A549 (cell line): ENCODE measurements at regions of chr1 and their contacts with region 1.

Region 1: GRCh38 chr1:165367375-165367993 is 11.0 kb upstream of the LMX1A start:
- DNase-seq: peak; percentile 71 to 74
- ATAC-seq: peak; percentile 65 to 89; a peak in 5 of 6 replicates
- H3K4me3 ChIP-seq: no peak overlapping the region
- H3K27ac ChIP-seq: no peak overlapping the region
- H3K4me1 ChIP-seq: no peaks in the 10 kb centered on the region
- CTCF ChIP-seq: peak; percentile 75
- EP300 ChIP-seq: no peak
- POLR2A ChIP-seq: no peak
- RAD21 ChIP-seq: peak; percentile 46 to 48; a peak in 4 of 5 replicates

Region 2: GRCh38 chr1:165073185-165074007 is 294.1 kb before region 1 on chr1:
- CTCF ChIA-PET with region 1: no interaction called
- POLR2A ChIA-PET with region 1: no interaction called
- DNase-seq: peak; percentile 37 to 59
- ATAC-seq: peak in 1 of 2 experiments; percentile 87; a peak in 4 of 6 replicates
- H3K4me3 ChIP-seq: no peak overlapping the region
- H3K27ac ChIP-seq: peak overlapping the region in 1 of 2 experiments; percentile 57; a peak in 3 of 6 replicates
- H3K4me1 ChIP-seq: peaks cover 5% of the 10 kb centered on the region; the same call in 1 of the 3 replicates
- CTCF ChIP-seq: peak; percentile 89
- EP300 ChIP-seq: no peak
- POLR2A ChIP-seq: no peak
- RAD21 ChIP-seq: peak; percentile 87 to 92

Region 3: DNA sequence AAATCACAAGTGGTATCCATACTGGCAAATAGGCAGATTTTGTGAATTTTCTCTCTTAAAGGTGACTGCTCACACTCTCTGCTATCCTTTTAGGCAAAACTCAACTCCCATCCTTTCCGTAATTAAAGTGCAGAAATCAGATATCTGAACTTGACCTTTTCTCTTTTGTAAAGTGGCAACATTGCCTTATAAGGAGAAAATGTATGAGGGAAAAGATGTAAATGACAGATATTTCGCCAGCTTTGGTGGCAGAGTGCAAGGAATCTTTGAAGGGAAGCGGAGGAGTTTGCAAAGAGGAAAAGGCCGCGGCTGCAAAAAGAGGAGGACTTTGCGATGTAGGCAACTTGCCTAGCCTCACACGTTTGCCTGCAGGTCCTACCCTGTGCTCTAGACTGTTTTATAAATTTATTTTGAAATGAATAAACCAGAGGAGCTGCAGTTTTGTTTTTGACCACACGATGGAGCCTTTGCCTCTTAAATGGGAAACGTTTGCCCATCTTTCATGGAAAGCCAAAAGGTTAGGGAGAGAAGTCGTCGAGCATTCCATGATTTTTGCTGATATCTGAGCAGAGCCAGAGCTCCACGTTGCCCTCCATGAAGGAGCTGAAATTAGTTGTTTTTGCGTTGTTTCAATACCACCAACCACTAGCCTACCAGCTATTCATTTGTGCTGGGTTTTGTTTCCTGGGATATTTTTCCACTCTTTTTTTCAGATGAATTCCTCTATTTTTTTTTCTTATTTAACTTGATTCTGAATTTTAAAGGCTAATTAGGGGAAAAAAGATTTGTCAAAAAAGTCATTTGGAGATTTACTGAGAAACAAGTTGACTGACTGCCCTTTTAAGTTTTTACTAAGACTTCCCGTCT is 253.2 kb before region 1 on chr1:
- CTCF ChIA-PET with region 1: interaction called, 72 read pairs
- POLR2A ChIA-PET with region 1: no interaction called
- DNase-seq: peak; percentile 17 to 59
- ATAC-seq: peak in 1 of 2 experiments; percentile 40; a peak in 3 of 6 replicates
- H3K4me3 ChIP-seq: no peak overlapping the region
- H3K27ac ChIP-seq: no peak overlapping the region
- H3K4me1 ChIP-seq: peaks cover 16% of the 10 kb centered on the region
- CTCF ChIP-seq: peak; percentile 79
- EP300 ChIP-seq: no peak
- POLR2A ChIP-seq: no peak
- RAD21 ChIP-seq: peak; percentile 80 to 81

Region 4: GRCh38 chr1:165144757-165145397 is 222.6 kb before region 1 on chr1:
- CTCF ChIA-PET with region 1: interaction called, 29 read pairs
- POLR2A ChIA-PET with region 1: no interaction called
- DNase-seq: peak in 1 of 2 experiments; percentile 51
- ATAC-seq: peak; percentile 91 to 96
- H3K4me3 ChIP-seq: no peak overlapping the region
- H3K27ac ChIP-seq: no peak overlapping the region
- H3K4me1 ChIP-seq: no peaks in the 10 kb centered on the region
- CTCF ChIP-seq: peak; percentile 74
- EP300 ChIP-seq: no peak
- POLR2A ChIP-seq: no peak
- RAD21 ChIP-seq: peak; percentile 58

Region 5: DNA sequence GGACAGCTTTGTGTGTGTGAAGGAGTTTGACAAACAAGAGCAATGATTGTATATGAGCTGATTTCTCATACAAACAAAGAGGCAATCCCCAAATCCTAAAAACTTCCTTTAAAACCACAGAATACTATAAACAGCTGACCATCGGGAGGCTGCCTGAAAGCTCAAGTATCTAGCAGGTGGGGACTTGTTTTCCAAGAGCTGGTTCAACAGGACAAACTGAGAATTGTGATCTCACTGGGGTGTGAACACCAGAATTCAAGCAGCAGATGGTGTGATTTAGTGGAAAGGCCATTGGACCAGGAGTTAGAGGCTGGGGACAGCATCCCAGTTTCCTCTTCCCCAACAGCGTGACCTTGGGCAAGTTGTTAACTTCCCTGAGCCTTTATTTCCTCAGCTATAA is 24.9 kb before region 1 on chr1:
- CTCF ChIA-PET with region 1: interaction called, 39 read pairs
- POLR2A ChIA-PET with region 1: no interaction called
- DNase-seq: no peak
- ATAC-seq: no peak
- H3K4me3 ChIP-seq: no peak overlapping the region
- H3K27ac ChIP-seq: no peak overlapping the region
- H3K4me1 ChIP-seq: no peaks in the 10 kb centered on the region
- CTCF ChIP-seq: no peak
- EP300 ChIP-seq: no peak
- POLR2A ChIP-seq: no peak
- RAD21 ChIP-seq: no peak

Region 6: GRCh38 chr1:165383067-165383466 is 15.6 kb after region 1 on chr1:
- CTCF ChIA-PET with region 1: interaction called, 47 read pairs
- POLR2A ChIA-PET with region 1: no interaction called
- DNase-seq: no peak
- ATAC-seq: no peak
- H3K4me3 ChIP-seq: no peak overlapping the region
- H3K27ac ChIP-seq: no peak overlapping the region
- H3K4me1 ChIP-seq: no peaks in the 10 kb centered on the region
- CTCF ChIP-seq: no peak
- EP300 ChIP-seq: no peak
- POLR2A ChIP-seq: no peak
- RAD21 ChIP-seq: no peak

Region 7: DNA sequence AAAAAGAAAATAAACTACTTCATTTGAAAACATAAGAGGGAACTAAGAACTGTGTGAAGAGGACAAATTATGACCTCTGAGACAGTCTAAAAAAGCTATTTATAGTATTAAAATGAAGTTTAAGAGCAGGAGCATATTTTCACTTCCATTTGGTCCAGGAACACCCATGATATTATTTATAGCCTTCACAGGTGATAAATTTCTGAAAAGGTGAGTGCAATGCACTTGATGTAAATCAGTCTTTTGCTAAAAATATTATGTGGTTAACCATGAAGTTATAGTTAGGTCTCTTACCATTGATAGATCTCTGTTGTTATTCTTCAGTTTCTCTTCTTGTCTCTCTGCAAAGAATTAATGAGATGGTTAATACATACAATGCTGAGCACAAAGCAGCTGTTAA is 386.4 kb after region 1 on chr1:
- CTCF ChIA-PET with region 1: no interaction called
- POLR2A ChIA-PET with region 1: no interaction called
- DNase-seq: no peak
- ATAC-seq: no peak
- H3K4me3 ChIP-seq: no peak overlapping the region
- H3K27ac ChIP-seq: no peak overlapping the region
- H3K4me1 ChIP-seq: no peaks in the 10 kb centered on the region
- CTCF ChIP-seq: no peak
- EP300 ChIP-seq: no peak
- POLR2A ChIP-seq: no peak
- RAD21 ChIP-seq: no peak